ENCODE measurements at regions of chr11 and their contacts with region 1.

Region 1: GRCh38 chr11:70297341-70297740 is 26.9 kb downstream of the PPFIA1 start:
- DNase-seq: peak in 1 of 2 experiments; percentile 83
- H3K4me3 ChIP-seq: no peak overlapping the region
- H3K27ac ChIP-seq: peak overlapping the region; percentile 12; the same call in 1 of the 2 replicates
- H3K4me1 ChIP-seq: peaks cover 13% of the 10 kb centered on the region
- H3K27me3 ChIP-seq: no peaks in the 10 kb centered on the region
- CTCF ChIP-seq: no peak

Region 2: GRCh38 chr11:70029115-70029830 is 268.1 kb before region 1 on chr11:
- CTCF ChIA-PET with region 1: no interaction called
- POLR2A ChIA-PET with region 1: no interaction called
- intact Hi-C with region 1: no loop called
- DNase-seq: no peak
- H3K4me3 ChIP-seq: no peak overlapping the region
- H3K27ac ChIP-seq: no peak overlapping the region
- H3K4me1 ChIP-seq: peaks cover 3% of the 10 kb centered on the region
- H3K27me3 ChIP-seq: no peaks in the 10 kb centered on the region
- CTCF ChIP-seq: no peak

Region 3: GRCh38 chr11:70220920-70221319 is 76.4 kb before region 1 on chr11:
- CTCF ChIA-PET with region 1: interaction called, 14 read pairs
- POLR2A ChIA-PET with region 1: no interaction called
- intact Hi-C with region 1: no loop called
- DNase-seq: no peak
- H3K4me3 ChIP-seq: no peak overlapping the region
- H3K27ac ChIP-seq: no peak overlapping the region
- H3K4me1 ChIP-seq: peaks cover 17% of the 10 kb centered on the region
- H3K27me3 ChIP-seq: no peaks in the 10 kb centered on the region
- CTCF ChIP-seq: no peak

Measured in PC-9 (cell line).